CD8-positive, alpha-beta T cell (primary cell): ENCODE measurements at regions of chr6 and their contacts with region 1.

Region 1: GRCh38 chr6:137552809-137553208 is 58.6 kb upstream of the OLIG3 start:
- DNase-seq: no peak
- ATAC-seq: no peak
- H3K4me3 ChIP-seq: no peak overlapping the region
- H3K4me3 Mint-ChIP-seq: no peak overlapping the region
- H3K27ac ChIP-seq: no peak overlapping the region
- H3K27ac Mint-ChIP-seq: no peak overlapping the region
- H3K4me1 ChIP-seq: no peaks in the 10 kb centered on the region
- H3K4me1 Mint-ChIP-seq: peaks cover 7% of the 10 kb centered on the region
- H3K27me3 ChIP-seq: no peaks in the 10 kb centered on the region
- H3K27me3 Mint-ChIP-seq: no peaks in the 10 kb centered on the region
- CTCF ChIP-seq: no peak

Region 2: GRCh38 chr6:136235217-136235532 is 1317.6 kb before region 1 on chr6:
- CTCF ChIA-PET with region 1: no interaction called
- POLR2A ChIA-PET with region 1: no interaction called
- intact Hi-C with region 1: no loop called
- DNase-seq: no peak
- ATAC-seq: no peak
- H3K4me3 ChIP-seq: no peak overlapping the region
- H3K4me3 Mint-ChIP-seq: no peak overlapping the region
- H3K27ac ChIP-seq: no peak overlapping the region
- H3K27ac Mint-ChIP-seq: no peak overlapping the region
- H3K4me1 ChIP-seq: no peaks in the 10 kb centered on the region
- H3K4me1 Mint-ChIP-seq: peaks cover 9% of the 10 kb centered on the region
- H3K27me3 ChIP-seq: no peaks in the 10 kb centered on the region
- H3K27me3 Mint-ChIP-seq: no peaks in the 10 kb centered on the region
- CTCF ChIP-seq: no peak

Region 3: DNA sequence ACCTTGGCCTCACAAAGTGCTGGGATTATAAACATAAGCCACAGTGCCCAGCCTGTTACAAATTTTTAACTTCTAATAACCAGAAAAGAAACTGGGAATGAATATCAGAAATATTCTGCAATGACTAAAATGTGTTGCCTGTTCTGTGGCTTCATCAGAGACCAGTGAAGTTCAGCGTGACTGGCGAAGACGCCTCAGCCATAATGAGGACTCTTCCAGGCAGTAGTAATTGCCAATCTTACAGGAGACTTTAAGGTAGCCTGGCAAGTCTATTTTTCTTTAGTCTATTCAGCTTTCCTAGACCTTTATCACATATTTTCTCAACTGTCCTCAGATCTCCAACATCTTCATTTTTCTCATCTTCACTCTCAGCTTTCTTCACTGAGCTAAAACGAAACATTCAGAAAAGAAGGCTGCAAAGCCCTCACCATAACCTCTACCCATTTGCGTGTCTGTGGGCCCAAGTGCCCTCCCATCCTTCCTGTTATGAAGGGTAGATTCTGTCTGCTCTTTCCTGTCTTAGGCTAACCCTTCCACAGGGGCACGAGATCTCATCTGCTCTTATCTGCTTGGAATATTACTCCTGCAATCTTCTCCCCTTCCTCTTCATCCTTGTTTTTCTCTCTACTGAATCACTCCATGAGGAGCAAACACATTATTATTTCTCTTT is 16.6 kb before region 1 on chr6:
- CTCF ChIA-PET with region 1: interaction called, 4 read pairs
- POLR2A ChIA-PET with region 1: no interaction called
- intact Hi-C with region 1: loop called in 1 of 2 experiments (anchors 2 kb)
- DNase-seq: peak in 7 of 9 experiments; percentile 6 to 64 (median 35)
- ATAC-seq: peak; percentile 59
- H3K4me3 ChIP-seq: no peak overlapping the region
- H3K4me3 Mint-ChIP-seq: no peak overlapping the region
- H3K27ac ChIP-seq: peak overlapping the region in 1 of 2 experiments; percentile 35
- H3K27ac Mint-ChIP-seq: no peak overlapping the region
- H3K4me1 ChIP-seq: peaks cover 19% of the 10 kb centered on the region
- H3K4me1 Mint-ChIP-seq: no peaks in the 10 kb centered on the region
- H3K27me3 ChIP-seq: no peaks in the 10 kb centered on the region
- H3K27me3 Mint-ChIP-seq: peaks cover 9% of the 10 kb centered on the region
- CTCF ChIP-seq: no peak